ENCODE measurements at regions of chr9 and their contacts with region 1.

Region 1: DNA sequence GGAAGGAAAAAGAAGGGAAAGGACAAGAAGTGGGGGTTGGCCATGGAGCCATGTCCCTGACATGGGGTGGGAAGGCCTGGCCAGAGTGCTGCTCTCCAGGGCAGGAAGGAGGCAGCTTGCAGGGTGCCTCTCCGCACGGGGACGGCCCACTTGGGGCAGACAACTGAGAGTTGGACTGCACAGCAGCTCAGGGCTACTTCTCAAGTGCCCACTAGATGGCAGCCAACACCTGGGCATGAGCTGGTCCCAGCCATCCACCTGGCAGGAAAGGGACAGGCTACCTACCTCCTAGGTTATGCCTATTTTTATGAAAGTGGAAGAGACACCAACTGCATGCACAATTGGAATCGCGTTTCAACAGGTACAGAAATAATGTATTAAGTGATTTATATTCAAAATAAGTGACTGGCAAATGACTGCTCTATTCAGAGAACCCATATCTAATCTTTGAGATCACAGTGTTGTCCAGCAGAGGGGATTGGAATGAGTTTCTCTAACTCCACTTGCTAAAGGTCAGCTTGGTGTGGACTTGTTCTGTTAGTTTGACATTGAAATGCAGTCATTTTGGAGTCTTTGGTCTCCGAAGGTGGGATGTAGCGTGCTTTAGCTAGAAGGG is 113.4 kb downstream of the SYK start:
- DNase-seq: peak; percentile 70
- H3K4me3 ChIP-seq: no peak overlapping the region
- H3K27ac ChIP-seq: no peak overlapping the region
- H3K4me1 ChIP-seq: no peaks in the 10 kb centered on the region
- H3K27me3 ChIP-seq: no peaks in the 10 kb centered on the region
- CTCF ChIP-seq: peak; percentile 89

Region 2: GRCh38 chr9:90659650-90660364 is 255.2 kb before region 1 on chr9:
- CTCF ChIA-PET with region 1: no interaction called
- POLR2A ChIA-PET with region 1: no interaction called
- intact Hi-C with region 1: no loop called
- DNase-seq: peak; percentile 38
- H3K4me3 ChIP-seq: no peak overlapping the region
- H3K27ac ChIP-seq: no peak overlapping the region
- H3K4me1 ChIP-seq: no peaks in the 10 kb centered on the region
- H3K27me3 ChIP-seq: no peaks in the 10 kb centered on the region
- CTCF ChIP-seq: no peak

Region 3: DNA sequence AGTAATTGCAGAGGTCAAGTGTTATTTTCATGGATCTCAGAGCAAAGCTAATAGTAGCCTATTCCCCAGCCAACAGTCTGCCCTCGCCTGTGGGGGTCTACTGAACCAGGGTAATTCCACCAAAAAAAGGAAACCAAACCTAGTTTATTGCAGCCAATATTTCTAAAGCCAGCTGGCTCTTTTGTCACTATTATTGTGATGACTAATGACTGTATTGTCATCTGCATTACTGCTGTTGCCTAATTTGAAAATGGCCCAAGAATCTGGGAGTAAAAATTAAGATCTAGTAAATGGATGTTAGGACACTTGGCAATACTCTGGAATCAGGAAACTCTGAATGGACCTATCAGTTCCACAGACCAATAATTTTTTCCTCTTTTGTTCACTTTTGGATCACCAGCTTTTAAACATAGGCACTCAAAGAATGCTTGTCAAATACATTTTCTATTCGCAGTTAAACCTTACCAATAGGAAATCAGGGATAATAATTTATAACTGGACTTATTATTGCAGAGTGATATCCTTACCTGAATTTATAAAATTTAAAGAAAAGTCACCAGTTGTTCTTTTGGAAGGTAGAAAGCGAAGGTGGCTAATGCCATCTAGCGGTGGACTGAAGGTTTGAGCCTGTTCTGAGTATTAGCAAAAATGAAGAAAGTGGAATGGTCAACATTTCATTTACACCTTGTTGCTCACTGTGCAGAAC is 44.2 kb before region 1 on chr9:
- CTCF ChIA-PET with region 1: no interaction called
- POLR2A ChIA-PET with region 1: no interaction called
- intact Hi-C with region 1: no loop called
- DNase-seq: peak; percentile 59
- H3K4me3 ChIP-seq: no peak overlapping the region
- H3K27ac ChIP-seq: no peak overlapping the region
- H3K4me1 ChIP-seq: peaks cover 5% of the 10 kb centered on the region
- H3K27me3 ChIP-seq: no peaks in the 10 kb centered on the region
- CTCF ChIP-seq: peak; percentile 89

Region 4: DNA sequence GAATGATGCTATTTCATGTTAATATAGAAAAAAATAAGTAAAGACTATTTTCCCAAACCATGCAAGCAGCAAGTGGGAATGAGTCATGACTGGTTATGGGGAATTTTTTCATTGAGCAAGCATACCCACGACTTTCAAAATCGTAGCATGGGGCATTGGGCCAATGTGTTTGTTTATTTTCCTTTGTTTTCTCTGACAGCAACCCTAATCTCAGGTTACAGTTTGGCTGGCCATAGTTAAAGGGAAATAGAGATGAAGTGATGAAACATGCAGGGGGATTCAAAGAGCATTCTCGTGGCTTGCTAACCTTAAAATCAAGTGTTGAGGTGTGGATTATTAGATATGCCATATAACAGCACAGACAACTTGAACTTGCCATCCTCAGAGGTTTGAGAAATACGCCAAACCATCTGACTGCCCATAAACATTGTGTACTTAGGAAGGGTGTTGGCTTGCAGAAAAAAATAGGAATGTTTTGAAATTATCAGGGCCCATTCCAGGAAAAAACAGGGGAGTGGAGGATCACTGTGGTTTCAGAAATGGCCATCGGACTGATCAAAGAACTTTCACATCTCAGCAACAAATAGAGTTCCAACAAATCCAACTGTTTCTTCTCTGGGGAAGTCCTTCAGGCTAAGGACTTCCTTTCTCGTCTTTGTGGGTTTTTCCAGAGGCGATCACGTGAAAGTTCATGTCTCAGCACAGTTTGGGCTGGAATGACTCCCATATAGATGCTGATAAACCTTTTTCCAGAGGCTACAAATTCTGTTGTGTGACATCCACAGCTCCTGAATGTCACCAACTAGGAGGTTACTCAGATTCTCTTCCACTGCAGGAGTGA is 145.7 kb after region 1 on chr9:
- CTCF ChIA-PET with region 1: no interaction called
- POLR2A ChIA-PET with region 1: no interaction called
- intact Hi-C with region 1: no loop called
- DNase-seq: no peak
- H3K4me3 ChIP-seq: no peak overlapping the region
- H3K27ac ChIP-seq: no peak overlapping the region
- H3K4me1 ChIP-seq: no peaks in the 10 kb centered on the region
- H3K27me3 ChIP-seq: no peaks in the 10 kb centered on the region
- CTCF ChIP-seq: no peak

Region 5: DNA sequence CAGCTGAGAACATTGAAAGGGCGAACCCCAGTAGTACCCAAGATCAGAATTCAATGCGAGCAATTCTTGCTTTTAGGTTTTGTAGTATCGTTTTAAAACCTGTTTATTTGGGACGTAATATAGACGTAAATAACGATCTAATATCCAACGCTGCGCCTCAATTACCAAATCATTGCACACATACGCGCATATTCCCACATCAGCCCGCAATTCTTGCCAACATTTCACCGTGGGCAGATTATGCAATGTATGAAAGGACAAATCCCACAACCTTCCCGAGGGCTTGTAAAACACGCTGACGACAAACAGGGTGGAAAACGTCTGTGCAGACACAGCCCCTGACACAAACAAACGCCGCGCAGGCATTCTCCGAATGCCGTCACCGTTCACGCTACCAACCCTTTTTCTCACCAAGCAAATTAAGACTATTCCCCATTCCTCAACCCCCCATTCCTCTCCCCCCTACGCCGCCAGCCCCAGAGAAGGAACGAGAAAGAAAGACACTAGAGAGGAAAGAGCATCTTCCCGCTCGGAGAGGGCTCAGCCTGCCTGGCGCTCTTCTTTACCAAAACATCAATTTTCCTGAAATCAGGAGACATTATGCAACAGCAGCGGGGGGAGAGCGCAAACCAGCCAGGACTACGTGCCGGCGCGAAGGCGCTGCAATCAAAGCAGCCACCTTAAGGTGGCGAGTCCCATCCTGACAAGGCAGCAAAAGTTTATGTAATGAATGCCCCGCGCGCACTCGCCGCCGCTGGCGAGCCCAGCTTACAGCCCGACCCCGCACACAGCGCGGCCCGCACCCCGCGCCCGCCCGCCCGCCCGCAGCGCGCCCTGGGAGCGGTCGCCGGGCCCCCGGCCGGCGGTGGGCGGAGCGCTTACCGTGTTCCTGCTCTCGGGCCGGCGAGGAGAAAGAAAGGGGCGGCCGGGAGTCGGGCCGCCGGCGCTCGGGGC is 508.1 kb after region 1 on chr9:
- CTCF ChIA-PET with region 1: interaction called, 27 read pairs
- POLR2A ChIA-PET with region 1: interaction called, 5 read pairs
- intact Hi-C with region 1: loop called (anchors 1 kb)
- DNase-seq: peak; percentile 82
- H3K4me3 ChIP-seq: peak overlapping the region; percentile 83
- H3K27ac ChIP-seq: peak overlapping the region; percentile 74
- H3K4me1 ChIP-seq: peaks cover 32% of the 10 kb centered on the region
- H3K27me3 ChIP-seq: no peaks in the 10 kb centered on the region
- CTCF ChIP-seq: peak; percentile 35; the same call in 1 of the 2 replicates

Region 6: GRCh38 chr9:91433180-91433579 is 518.2 kb after region 1 on chr9:
- CTCF ChIA-PET with region 1: interaction called, 11 read pairs
- POLR2A ChIA-PET with region 1: no interaction called
- intact Hi-C with region 1: no loop called
- DNase-seq: peak; percentile 59
- H3K4me3 ChIP-seq: no peak overlapping the region
- H3K27ac ChIP-seq: no peak overlapping the region
- H3K4me1 ChIP-seq: no peaks in the 10 kb centered on the region
- H3K27me3 ChIP-seq: no peaks in the 10 kb centered on the region
- CTCF ChIP-seq: peak; percentile 49

Region 7: GRCh38 chr9:91560285-91560684 is 645.3 kb after region 1 on chr9:
- CTCF ChIA-PET with region 1: interaction called, 9 read pairs
- POLR2A ChIA-PET with region 1: no interaction called
- intact Hi-C with region 1: loop called (anchors 5 kb)
- DNase-seq: peak; percentile 29
- H3K4me3 ChIP-seq: no peak overlapping the region
- H3K27ac ChIP-seq: peak overlapping the region; percentile 29
- H3K4me1 ChIP-seq: peaks cover 25% of the 10 kb centered on the region
- H3K27me3 ChIP-seq: no peaks in the 10 kb centered on the region
- CTCF ChIP-seq: no peak

Region 8: GRCh38 chr9:91681461-91682305 is 766.7 kb after region 1 on chr9:
- CTCF ChIA-PET with region 1: interaction called, 3 read pairs
- POLR2A ChIA-PET with region 1: no interaction called
- intact Hi-C with region 1: loop called (anchors 1 kb)
- DNase-seq: peak; percentile 87
- H3K4me3 ChIP-seq: no peak overlapping the region
- H3K27ac ChIP-seq: no peak overlapping the region
- H3K4me1 ChIP-seq: peaks cover 8% of the 10 kb centered on the region
- H3K27me3 ChIP-seq: no peaks in the 10 kb centered on the region
- CTCF ChIP-seq: peak; percentile 97

Region 9: GRCh38 chr9:91727316-91727861 is 812.4 kb after region 1 on chr9:
- CTCF ChIA-PET with region 1: interaction called, 19 read pairs
- POLR2A ChIA-PET with region 1: no interaction called
- intact Hi-C with region 1: loop called (anchors 2 kb)
- DNase-seq: peak; percentile 64
- H3K4me3 ChIP-seq: no peak overlapping the region
- H3K27ac ChIP-seq: no peak overlapping the region
- H3K4me1 ChIP-seq: no peaks in the 10 kb centered on the region
- H3K27me3 ChIP-seq: no peaks in the 10 kb centered on the region
- CTCF ChIP-seq: peak; percentile 80